ENCODE measurements at regions of chr18 and their contacts with region 1.

Region 1: DNA sequence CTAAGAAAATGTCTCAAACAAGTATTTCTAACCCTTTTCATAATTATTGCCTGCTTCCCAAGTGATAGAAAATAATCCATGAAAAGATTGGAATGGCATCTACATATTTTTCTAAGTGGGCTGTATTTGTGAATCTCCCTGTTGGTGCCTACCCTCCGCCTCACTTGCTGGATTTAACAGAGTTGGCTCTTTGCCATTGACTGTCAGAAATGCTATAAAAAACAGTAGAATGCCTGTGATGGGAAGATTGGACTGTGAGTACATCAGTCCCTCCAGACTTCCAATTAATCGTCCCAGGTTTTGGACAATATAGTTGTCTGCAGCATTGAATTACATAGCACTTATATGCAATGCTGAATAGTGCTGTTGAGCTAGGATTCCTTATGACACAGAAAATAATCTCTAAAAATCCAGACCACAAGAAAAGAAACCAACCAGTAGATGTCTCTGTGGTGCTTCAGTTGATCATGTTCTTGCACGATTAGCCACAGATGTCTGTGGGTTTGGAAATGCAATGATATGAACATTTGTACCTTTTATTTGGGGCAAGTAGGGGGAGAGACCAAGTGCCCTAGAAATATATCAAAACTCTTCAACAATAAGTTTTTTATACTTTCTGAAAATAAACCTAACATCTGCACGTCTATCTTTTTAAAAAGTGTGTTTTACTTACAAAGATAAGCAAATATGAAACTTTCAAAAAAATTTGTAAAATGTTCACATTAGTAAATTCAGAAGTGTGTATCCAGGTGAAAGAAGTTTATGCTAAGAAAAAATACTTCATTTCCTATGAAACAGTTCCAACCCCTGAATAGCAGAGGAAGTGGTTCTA is 88.5 kb downstream of the DYNAP start:
- DNase-seq: no peak
- H3K4me3 Mint-ChIP-seq: no peak overlapping the region
- H3K27ac Mint-ChIP-seq: no peak overlapping the region
- H3K4me1 Mint-ChIP-seq: peaks cover 2% of the 10 kb centered on the region
- H3K27me3 Mint-ChIP-seq: peaks cover 7% of the 10 kb centered on the region

Region 2: DNA sequence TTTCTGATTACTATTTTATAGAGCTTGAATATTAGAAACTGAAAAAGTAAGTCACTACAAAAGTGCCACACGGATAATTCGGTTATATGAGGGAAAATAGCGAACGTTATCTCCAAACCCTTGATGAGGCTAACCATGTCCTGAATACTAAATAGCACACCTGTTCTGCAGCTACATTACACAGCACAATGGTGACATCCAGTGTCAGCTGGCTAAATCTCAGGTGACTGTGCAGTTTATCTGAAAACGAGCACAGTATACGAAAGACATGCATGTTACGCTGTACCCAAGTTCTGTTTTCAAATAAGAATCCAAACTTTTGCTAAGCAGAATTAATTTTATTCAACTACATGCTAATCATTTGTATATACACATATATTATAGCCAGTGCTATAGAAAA is 270.7 kb after region 1 on chr18:
- CTCF ChIA-PET with region 1: interaction called, 25 read pairs
- DNase-seq: peak; percentile 41
- H3K4me3 Mint-ChIP-seq: no peak overlapping the region
- H3K27ac Mint-ChIP-seq: no peak overlapping the region
- H3K4me1 Mint-ChIP-seq: peaks cover 19% of the 10 kb centered on the region
- H3K27me3 Mint-ChIP-seq: peaks cover 28% of the 10 kb centered on the region

Region 3: DNA sequence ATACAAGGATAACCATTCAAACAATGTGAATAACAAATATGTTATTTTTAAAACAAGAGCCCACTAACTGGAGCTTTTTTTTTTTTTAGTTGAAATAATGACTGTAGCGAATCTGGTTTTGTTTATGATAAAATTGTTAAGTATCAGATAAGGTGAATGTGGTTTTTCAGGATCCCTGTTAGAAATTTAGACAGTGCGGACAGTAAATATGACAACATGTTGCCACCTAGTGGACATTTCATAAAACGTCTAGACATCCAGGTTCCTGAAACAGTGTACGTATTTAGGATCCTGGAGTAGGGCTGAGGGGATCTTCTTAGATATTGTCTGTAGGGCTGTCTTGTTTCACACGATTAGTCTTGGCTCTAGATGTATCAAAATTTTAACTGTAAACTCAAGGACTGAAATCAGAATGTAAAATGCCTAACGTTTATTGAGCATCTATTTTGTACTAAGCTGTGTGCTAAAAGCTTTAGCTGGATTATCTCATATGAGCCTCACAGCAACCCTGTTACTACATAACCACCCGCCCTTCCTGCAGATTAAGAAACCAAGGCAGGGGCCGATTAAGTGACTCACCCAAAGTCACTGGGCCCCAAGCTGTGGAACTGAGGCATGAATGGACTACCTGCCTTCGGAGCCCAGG is 303.6 kb after region 1 on chr18:
- CTCF ChIA-PET with region 1: interaction called, 23 read pairs
- DNase-seq: no peak
- H3K4me3 Mint-ChIP-seq: no peak overlapping the region
- H3K27ac Mint-ChIP-seq: no peak overlapping the region
- H3K4me1 Mint-ChIP-seq: no peaks in the 10 kb centered on the region
- H3K27me3 Mint-ChIP-seq: peaks cover 5% of the 10 kb centered on the region

Measured in activated naive CD4-positive, alpha-beta T cell treated with anti-CD3 and anti-CD28 coated beads, Interleukin-2, amount 10 ng/mL, durations not matched to agents 7 days and 5 days (primary cell).